Activated T-helper 2 cell treated with anti-CD3 and anti-CD28 coated beads, Interferon-gamma antibody, Interleukin-2, Interleukin-4, amounts not matched to agents 10 μg/mL and 5 μg/mL and 100 μg/mL, durations not matched to agents 14 hours and 24 hours and 36 hours (primary cell): ENCODE measurements at regions of chr17 and their contacts with region 1.

Region 1: GRCh38 chr17:143782-144281 is 6.5 kb downstream of the SCGB1C2 start:
- DNase-seq: peak; percentile 78
- H3K4me3 Mint-ChIP-seq: no peak overlapping the region
- H3K27ac Mint-ChIP-seq: no peak overlapping the region
- H3K4me1 Mint-ChIP-seq: no peaks in the 10 kb centered on the region
- H3K27me3 Mint-ChIP-seq: peaks cover 7% of the 10 kb centered on the region

Region 2: DNA sequence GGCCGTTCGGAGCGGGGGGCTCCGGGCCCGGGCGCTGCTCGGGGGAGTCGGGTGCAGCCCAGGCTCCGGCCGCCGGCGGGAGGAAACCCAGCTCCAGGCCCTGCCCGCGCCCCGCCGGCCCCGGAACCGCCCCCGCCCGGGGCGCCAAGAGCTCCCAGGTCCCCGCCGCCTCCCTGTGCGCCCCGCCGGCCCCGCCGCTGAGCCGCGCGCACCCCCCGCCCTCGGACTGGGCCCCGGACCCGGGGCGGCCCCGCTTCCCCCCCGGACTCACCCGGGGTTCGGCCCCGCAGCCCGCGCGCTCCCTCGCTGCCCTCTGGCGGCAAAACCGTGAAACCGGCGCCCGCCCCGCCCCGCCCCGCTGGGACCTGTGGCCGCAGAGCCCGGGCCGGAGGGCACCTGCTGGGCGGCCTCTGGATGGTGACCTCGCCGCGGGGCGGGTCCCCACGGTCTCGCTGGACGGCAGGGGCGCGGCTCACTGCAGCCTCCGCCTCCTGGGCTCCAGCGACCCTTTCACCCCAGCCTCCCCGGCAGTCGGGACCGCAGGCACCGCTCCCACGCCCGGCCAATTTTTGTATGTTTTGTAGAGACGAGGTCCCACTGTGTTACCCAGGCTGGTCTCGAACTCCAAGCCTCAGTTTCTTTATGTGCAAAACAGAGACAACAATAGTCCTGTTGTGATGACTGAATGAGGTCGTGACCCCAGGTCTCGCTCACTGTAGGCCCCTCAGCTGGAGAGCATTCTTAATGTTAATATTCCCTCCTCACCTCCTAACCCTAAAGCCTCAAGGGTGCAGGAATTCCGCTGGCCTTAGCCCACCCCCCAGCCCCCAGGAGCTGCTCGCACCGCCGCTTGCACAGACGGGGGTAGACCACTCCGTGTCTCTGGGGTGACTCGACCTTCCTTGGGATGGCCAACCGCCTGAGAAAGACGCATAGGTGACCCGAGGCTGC is 242.4 kb after region 1 on chr17:
- intact Hi-C with region 1: loop called (anchors 5 kb)
- DNase-seq: peak; percentile 55
- H3K4me3 Mint-ChIP-seq: peak overlapping the region; percentile 79
- H3K27ac Mint-ChIP-seq: no peak overlapping the region
- H3K4me1 Mint-ChIP-seq: peaks cover 13% of the 10 kb centered on the region
- H3K27me3 Mint-ChIP-seq: peaks cover 31% of the 10 kb centered on the region